ENCODE measurements at regions of chr10 and their contacts with region 1.

Region 1: GRCh38 chr10:132458593-132459300 is 61.7 kb downstream of the PWWP2B start:
- DNase-seq: no peak
- H3K4me3 ChIP-seq: no peak overlapping the region
- CTCF ChIP-seq: peak in 1 of 3 donors; percentile 66
- POLR2A ChIP-seq: no peak

Region 2: DNA sequence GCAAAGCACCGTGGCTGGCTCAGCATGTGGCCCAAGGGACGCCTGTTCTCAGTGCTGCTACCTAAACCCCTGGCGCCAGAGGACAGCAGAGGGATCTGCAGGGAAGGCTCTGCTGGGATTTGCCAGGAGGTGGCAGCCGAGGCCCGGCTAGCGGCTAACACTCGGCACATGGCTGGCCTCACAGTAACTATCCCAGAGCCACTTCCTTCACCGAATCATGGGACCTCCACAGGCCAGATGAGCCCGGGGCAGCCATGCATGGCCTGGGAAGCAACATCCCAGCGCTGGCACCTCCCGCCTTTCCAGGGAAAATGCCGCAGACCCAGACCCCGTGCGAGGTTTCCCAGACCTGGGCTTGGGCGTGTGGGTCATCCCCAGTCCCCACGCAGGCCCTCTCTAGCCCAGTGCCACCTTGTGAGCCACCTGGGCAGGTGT is 235.6 kb before region 1 on chr10:
- intact Hi-C with region 1: loop called (anchors 5 kb)
- DNase-seq: peak; percentile 67 to 94
- H3K4me3 ChIP-seq: no peak overlapping the region
- CTCF ChIP-seq: peak in 1 of 3 donors; percentile 90
- POLR2A ChIP-seq: no peak

Region 3: DNA sequence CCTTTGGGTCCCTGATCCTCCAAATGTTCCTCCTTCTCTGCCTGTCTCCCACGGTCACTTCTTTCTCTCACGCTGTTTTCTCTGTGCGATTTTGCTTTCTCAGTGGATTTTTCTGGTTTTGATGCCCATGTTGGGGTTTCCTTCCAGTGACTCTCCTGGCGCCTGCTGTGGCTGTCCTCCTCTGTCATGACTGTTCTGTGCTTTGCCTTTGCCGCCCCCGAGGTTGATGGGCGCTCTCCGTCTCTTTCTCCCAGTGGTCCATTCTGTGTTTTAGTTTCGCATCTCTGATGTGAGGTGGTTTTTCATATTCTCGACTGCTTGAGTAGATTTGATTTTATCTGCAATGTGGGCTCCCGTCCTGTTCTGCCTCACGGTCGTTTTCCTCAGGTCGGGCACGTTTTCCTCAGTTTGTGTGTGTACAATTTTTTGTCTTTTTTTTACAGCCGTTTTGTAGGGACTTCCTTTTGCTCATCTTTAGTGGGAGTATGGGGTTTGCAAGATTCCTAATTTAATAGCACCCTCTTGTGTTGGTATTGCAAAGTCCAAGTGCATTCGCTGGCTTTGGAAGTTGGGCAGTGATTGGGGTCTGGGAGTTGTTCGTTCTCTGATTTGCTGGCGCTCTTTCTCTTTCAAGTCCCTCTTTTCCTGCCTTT is 178.9 kb after region 1 on chr10:
- intact Hi-C with region 1: loop called (anchors 5 kb)
- DNase-seq: no peak
- H3K4me3 ChIP-seq: no peak overlapping the region
- CTCF ChIP-seq: no peak
- POLR2A ChIP-seq: no peak